Activated CD4-positive, alpha-beta memory T cell treated with anti-CD3 and anti-CD28 coated beads for 36 hours (primary cell): ENCODE measurements at regions of chr22 and their contacts with region 1.

Region 1: GRCh38 chr22:26364066-26365015 is 64.7 kb upstream of the ASPHD2 start:
- DNase-seq: peak; percentile 57
- H3K4me3 Mint-ChIP-seq: no peak overlapping the region
- H3K27ac Mint-ChIP-seq: no peak overlapping the region
- H3K4me1 Mint-ChIP-seq: peaks cover 3% of the 10 kb centered on the region
- H3K27me3 Mint-ChIP-seq: peaks cover 14% of the 10 kb centered on the region

Region 2: DNA sequence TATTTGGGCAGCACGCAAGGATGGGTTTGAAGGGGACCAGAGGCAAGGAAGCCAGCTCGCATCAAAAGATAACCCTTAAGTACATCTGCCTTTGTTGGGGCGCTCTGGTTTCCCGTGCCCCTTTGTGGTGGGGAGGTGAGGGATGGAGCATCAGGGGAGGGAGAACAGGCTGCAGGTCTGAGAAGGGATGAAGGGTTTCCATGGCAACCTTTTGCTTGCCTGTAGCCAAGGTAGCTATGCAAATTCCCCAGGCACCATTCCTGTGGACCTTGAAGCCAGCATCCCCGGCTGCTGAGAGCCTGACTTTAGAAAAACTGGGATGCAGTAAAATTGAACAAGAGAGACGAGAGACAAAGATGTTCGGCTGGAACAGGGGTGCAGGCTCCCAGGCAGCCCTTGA is 119.3 kb before region 1 on chr22:
- CTCF ChIA-PET with region 1: no interaction called
- POLR2A ChIA-PET with region 1: no interaction called
- intact Hi-C with region 1: no loop called
- DNase-seq: no peak
- H3K4me3 Mint-ChIP-seq: no peak overlapping the region
- H3K27ac Mint-ChIP-seq: no peak overlapping the region
- H3K4me1 Mint-ChIP-seq: no peaks in the 10 kb centered on the region
- H3K27me3 Mint-ChIP-seq: peaks cover 10% of the 10 kb centered on the region

Region 3: GRCh38 chr22:26374391-26375026 is 10.2 kb after region 1 on chr22:
- CTCF ChIA-PET with region 1: interaction called, 23 read pairs
- POLR2A ChIA-PET with region 1: no interaction called
- intact Hi-C with region 1: no loop called
- DNase-seq: no peak
- H3K4me3 Mint-ChIP-seq: no peak overlapping the region
- H3K27ac Mint-ChIP-seq: no peak overlapping the region
- H3K4me1 Mint-ChIP-seq: peaks cover 4% of the 10 kb centered on the region
- H3K27me3 Mint-ChIP-seq: peaks cover 28% of the 10 kb centered on the region

Region 4: GRCh38 chr22:26391623-26392022 is 27.3 kb after region 1 on chr22:
- CTCF ChIA-PET with region 1: interaction called, 14 read pairs
- POLR2A ChIA-PET with region 1: no interaction called
- intact Hi-C with region 1: no loop called
- DNase-seq: no peak
- H3K4me3 Mint-ChIP-seq: no peak overlapping the region
- H3K27ac Mint-ChIP-seq: no peak overlapping the region
- H3K4me1 Mint-ChIP-seq: no peaks in the 10 kb centered on the region
- H3K27me3 Mint-ChIP-seq: peaks cover 9% of the 10 kb centered on the region